ENCODE measurements at regions of chr5 and their contacts with region 1.

Region 1: GRCh38 chr5:68369457-68370125 is 154.0 kb downstream of the PIK3R1 start:
- DNase-seq: peak; percentile 69
- H3K4me3 Mint-ChIP-seq: peak overlapping the region; percentile 13
- H3K27ac Mint-ChIP-seq: peak overlapping the region; percentile 36
- H3K4me1 Mint-ChIP-seq: peaks cover 35% of the 10 kb centered on the region
- H3K27me3 Mint-ChIP-seq: no peaks in the 10 kb centered on the region

Region 2: DNA sequence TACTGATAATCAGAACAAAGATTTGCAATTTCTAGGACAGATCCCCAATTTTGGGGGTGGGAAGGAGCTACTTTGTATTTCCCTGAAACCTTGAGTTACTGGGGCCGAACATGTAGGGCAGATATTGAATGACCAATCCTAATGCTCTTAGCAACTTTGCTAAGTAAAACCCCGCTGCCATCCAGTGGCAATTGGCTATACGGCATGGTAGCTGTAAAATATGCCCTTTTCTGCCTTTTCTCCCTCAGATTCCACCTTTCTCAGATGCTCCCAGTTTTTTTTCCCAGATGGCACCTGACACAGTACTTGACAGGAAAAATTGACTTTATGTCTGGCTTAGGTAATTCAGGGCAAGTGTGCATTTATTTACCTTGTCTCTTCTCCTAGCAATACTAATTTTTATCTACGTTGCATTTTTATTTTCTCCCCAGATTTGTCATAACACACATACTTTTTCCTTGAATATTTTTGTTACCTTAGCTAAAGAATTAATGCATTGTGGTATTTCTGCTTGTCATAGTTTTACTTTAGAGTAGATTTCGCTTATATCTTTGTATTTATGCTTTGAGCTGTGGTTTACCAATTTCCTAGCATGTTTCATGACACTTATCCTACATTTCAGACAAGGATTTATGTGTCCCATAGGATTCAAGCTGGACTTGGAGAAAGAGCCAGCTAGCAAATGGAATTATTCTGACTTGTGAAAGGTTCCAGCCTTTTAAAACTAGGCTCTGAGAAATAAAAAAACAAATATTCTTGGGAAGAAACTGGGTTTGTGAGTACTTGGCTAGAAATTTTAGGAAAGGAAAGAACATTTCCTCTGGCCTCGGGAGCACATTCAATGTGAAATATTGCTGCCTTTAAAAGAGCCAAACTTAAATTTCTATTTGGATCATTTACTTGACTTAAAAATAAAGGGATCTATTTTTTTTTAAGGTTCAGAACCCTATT is 116.6 kb before region 1 on chr5:
- CTCF ChIA-PET with region 1: no interaction called
- POLR2A ChIA-PET with region 1: no interaction called
- intact Hi-C with region 1: no loop called
- DNase-seq: peak; percentile 59
- H3K4me3 Mint-ChIP-seq: no peak overlapping the region
- H3K27ac Mint-ChIP-seq: no peak overlapping the region
- H3K4me1 Mint-ChIP-seq: peaks cover 90% of the 10 kb centered on the region
- H3K27me3 Mint-ChIP-seq: no peaks in the 10 kb centered on the region

Region 3: GRCh38 chr5:68303038-68303738 is 66.4 kb before region 1 on chr5:
- CTCF ChIA-PET with region 1: no interaction called
- POLR2A ChIA-PET with region 1: no interaction called
- intact Hi-C with region 1: loop called (anchors 2 kb)
- DNase-seq: no peak
- H3K4me3 Mint-ChIP-seq: no peak overlapping the region
- H3K27ac Mint-ChIP-seq: peak overlapping the region; percentile 57
- H3K4me1 Mint-ChIP-seq: peaks cover 49% of the 10 kb centered on the region
- H3K27me3 Mint-ChIP-seq: no peaks in the 10 kb centered on the region

Region 4: DNA sequence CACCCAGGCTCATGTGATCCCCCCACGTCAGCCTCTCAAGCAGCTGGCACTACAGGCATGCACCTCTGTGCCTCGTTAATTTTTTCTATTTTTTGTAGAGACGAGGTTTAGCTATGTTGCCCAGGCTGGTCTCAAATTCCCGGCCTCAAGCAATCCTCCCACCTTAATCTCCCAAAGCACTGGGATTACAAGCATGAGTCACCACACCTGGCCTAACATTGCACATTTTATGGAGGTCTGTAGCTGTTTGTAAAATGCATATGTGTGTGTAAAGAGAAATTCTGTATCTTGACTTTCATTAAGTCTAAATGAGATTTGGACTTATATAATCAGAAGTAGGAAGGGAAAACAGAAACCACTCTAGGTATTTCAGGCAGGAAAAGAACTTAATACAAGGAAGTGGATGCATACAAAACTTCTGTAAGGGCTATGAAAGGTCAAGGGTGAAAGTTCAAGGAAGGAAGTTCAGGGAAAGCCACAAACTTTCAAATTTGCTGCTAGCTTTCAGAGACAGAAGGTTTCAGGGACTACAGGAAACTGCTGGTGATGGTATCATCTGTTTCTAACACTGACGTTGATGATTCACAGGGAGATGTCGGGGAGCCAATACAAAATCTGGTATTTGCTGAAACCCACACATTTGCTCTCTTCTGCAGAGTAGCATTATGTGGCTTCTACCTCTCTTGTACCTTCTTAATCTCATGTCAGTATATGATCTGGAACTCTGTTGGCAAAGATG is 55.4 kb after region 1 on chr5:
- CTCF ChIA-PET with region 1: no interaction called
- POLR2A ChIA-PET with region 1: no interaction called
- intact Hi-C with region 1: loop called (anchors 1 kb)
- DNase-seq: peak; percentile 35
- H3K4me3 Mint-ChIP-seq: no peak overlapping the region
- H3K27ac Mint-ChIP-seq: no peak overlapping the region
- H3K4me1 Mint-ChIP-seq: peaks cover 42% of the 10 kb centered on the region
- H3K27me3 Mint-ChIP-seq: no peaks in the 10 kb centered on the region